ENCODE measurements at regions of chr6 and their contacts with region 1.

Region 1: DNA sequence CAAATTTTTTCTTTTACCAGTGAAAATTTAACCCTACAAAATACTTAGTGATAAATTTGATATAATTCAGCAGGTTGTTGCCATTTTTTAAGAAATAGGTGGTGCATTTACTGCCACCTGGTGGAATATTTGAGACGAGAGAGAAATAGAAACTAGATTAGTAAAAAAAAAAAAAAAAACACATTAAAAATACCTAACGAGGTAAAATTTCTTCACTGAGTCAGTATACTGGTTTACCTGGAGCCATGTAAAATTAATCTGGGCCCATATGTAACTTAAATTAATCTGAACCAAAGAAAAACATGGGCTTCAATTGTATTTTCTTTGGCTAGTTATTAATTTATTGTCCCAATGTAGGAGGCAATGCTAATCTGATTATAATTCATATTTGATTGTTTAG is 520.8 kb downstream of the EPM2A start:
- DNase-seq: peak; percentile 36
- ATAC-seq: no peak
- H3K4me3 ChIP-seq: no peak overlapping the region
- H3K27ac ChIP-seq: no peak overlapping the region
- H3K4me1 ChIP-seq: peaks cover 0 to 5% of the 10 kb centered on the region in 2 experiments; a peak in 2 of 4 replicates
- H3K27me3 ChIP-seq: no peaks in the 10 kb centered on the region
- CTCF ChIP-seq: peak; percentile 33 to 68 (median 63); a peak in 5 of 6 replicates
- POLR2A ChIP-seq: no peak
- RAD21 ChIP-seq: peak; percentile 77

Region 2: DNA sequence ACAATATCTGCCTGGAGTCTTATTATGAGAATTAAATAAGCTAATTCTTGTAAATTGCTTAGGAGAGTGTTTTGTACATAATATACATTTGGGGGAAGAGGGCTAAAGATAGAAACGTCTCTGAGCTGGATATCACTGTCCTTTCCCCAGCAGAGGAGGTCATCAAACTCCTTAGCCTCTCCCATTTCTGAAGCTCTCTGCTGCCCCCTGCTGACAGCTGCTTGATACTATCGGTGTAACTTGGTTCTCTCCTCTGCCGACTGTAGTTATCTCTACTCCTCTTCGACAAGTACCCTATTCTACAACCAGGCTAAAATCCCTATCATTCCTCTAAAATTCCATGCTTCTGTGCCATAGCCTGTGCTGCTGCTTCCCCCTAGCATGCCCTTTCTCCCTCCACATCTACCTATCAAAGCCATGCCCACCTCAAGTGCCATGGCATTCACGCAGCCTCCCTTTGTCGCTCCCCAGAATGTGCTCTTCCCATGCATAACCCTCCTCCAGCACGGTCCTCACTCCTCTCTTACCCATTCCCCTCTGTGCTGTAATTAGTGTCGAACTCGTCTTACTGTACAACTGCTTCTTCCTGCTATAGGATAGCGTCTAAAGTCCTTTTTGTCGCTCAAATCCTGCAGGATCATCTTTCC is 419.5 kb after region 1 on chr6:
- CTCF ChIA-PET with region 1: interaction called, 4 read pairs
- POLR2A ChIA-PET with region 1: no interaction called
- RAD21 ChIA-PET with region 1: no interaction called
- intact Hi-C with region 1: loop called (anchors 2 kb)
- DNase-seq: peak; percentile 75
- ATAC-seq: peak; percentile 98
- H3K4me3 ChIP-seq: no peak overlapping the region
- H3K27ac ChIP-seq: no peak overlapping the region
- H3K4me1 ChIP-seq: no peaks in the 10 kb centered on the region
- H3K27me3 ChIP-seq: no peaks in the 10 kb centered on the region
- CTCF ChIP-seq: peak; percentile 46 to 80 (median 78); a peak in 5 of 6 replicates
- POLR2A ChIP-seq: no peak
- RAD21 ChIP-seq: peak; percentile 90